ENCODE measurements at regions of chr20 and their contacts with region 1.

Region 1: DNA sequence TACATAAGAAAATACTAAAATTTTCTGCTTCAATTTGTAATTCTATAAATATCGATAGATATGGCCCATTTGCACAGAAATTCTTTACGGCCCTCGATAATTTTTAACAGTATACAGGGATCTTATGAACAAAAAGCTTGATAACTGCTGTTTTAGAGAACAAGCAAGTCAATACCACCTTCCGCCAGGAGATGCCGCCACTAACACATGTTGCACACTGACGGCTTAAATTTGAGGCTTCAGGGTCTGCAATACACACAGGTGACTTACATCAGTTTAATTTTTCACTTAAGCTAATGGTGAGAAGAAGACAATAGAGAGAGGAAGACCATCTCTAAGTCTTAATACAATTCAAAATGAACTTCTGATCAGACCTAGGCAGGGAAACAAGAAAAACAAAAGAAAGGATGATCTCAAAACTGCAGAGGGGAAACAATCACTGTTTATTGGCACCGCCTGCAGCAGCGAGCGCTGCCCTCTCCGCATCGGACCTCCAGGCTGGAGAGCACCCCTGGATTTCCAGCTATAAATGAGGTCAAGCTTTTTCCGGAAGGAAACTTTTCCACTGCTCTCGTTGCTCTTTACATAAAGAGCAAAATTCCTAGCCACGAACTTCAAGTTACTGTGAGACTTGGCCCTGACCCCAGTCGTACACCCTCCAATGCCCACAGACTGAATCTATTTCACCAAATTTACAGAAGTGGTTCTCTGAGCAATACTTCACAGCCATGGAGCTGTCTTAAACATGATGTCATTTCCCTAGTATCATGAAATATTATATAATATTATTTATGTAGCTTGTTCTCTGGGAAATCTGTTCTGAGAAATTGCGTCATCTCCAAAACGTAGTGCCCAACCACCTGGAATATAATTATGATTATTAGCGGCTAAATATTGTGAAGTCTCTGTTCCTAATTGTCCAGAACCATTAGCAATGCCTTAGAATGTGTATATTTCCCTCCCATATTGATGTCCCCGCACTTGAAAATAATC is 54.1 kb downstream of the OTOR start:
- DNase-seq: peak in 1 of 2 experiments; percentile 64
- H3K4me3 ChIP-seq: no peak overlapping the region
- H3K27ac ChIP-seq: no peak overlapping the region
- H3K4me1 ChIP-seq: no peaks in the 10 kb centered on the region
- H3K27me3 ChIP-seq: peaks cover 82% of the 10 kb centered on the region
- CTCF ChIP-seq: peak; percentile 88

Region 2: GRCh38 chr20:16821211-16822089 is 19.2 kb after region 1 on chr20:
- CTCF ChIA-PET with region 1: interaction called, 10 read pairs
- POLR2A ChIA-PET with region 1: no interaction called
- intact Hi-C with region 1: loop called (anchors 1 kb)
- DNase-seq: peak; percentile 25 to 43
- H3K4me3 ChIP-seq: no peak overlapping the region
- H3K27ac ChIP-seq: no peak overlapping the region
- H3K4me1 ChIP-seq: no peaks in the 10 kb centered on the region
- H3K27me3 ChIP-seq: peaks cover 17% of the 10 kb centered on the region
- CTCF ChIP-seq: peak; percentile 95

Region 3: DNA sequence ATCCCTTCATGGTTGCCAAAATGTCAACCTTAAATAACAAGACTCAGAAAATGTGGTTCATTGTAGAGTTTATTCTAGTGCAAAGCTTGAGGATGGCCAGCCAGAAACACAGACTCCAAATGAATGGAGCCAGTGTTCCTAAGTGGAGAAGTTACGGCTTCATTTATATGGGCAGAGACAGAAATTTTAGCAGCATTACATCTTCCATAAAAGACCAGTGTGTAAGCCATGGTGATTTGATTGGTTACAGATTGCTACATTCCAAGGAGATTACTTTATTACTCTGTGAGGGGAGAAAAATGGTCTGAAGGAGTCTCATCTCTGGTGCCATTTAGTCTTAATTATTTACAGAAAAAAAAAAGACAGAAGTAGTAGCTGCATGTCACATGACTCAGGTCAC is 43.8 kb after region 1 on chr20:
- CTCF ChIA-PET with region 1: no interaction called
- POLR2A ChIA-PET with region 1: no interaction called
- intact Hi-C with region 1: no loop called
- DNase-seq: no peak
- H3K4me3 ChIP-seq: no peak overlapping the region
- H3K27ac ChIP-seq: no peak overlapping the region
- H3K4me1 ChIP-seq: no peaks in the 10 kb centered on the region
- H3K27me3 ChIP-seq: no peaks in the 10 kb centered on the region
- CTCF ChIP-seq: no peak

Region 4: DNA sequence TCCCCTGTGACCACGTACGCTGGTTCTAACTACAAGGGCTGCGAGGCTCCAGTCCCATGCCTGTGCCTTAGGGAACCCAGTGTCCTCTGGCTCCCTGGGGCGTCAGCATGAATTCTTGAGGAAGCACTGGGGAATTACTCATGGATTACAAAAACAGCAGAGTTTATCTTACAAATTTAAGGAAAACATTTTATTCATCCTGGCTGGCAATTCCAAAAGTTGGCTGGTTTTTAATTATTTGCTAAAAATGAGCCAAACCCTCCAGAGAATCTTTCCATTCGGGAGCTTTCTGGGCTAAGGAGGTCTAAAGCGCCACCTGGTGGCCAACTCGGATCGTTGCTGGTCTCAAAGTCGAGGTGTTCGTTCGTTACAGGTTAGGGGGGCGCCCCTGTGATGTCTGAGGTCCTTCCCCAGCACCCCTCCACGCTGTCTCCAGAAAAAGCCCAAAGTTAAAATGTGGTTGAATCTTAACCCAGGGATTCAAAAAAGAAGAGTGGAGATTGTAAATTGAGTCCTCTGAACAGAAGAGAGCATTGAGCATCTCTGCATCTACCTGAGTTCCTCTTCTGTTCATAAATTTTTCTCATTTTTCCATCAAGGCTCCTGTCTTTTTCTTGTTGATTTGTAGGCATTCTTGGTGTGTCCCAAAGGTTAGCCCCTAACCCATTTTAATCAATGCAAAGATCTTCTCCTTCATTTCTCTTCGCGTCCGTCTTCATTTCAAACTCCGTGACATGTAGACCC is 629.6 kb after region 1 on chr20:
- CTCF ChIA-PET with region 1: interaction called, 4 read pairs
- POLR2A ChIA-PET with region 1: interaction called, 5 read pairs
- intact Hi-C with region 1: loop called (anchors 1 kb)
- DNase-seq: peak in 1 of 2 experiments; percentile 43
- H3K4me3 ChIP-seq: no peak overlapping the region
- H3K27ac ChIP-seq: no peak overlapping the region
- H3K4me1 ChIP-seq: no peaks in the 10 kb centered on the region
- H3K27me3 ChIP-seq: peaks cover 71% of the 10 kb centered on the region
- CTCF ChIP-seq: peak; percentile 96

Region 5: DNA sequence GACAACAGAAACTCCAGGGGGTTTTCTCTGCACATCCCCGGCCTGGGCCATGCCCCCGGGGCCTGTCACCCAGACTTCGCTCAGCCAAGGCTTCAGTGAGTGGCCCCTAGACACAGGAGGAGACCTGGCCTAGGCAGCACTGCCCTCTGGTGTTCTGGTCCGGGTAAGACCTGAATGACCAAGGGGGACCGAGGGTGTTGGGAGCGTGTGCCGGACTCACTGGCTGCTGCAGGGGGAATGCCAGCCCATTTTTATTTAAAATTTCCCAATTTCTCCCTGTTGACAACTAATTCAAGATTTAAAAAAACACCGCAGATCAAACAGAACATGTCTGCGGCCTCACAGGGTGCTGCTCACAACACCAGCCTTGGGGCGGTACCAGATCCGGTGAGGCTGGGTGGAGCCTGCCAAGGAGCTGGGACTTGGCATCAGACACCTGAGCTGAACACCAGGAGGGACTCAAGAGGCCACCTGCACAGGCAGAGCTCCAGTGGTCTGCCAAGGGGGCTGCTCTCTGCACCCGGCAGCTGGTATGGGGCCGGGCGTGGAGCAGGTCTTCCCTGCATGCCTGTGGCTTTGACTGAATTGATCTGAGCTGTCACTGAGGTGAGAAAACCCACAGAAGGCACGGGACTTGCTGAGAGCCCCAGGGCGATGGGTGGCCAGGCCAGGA is 815.5 kb after region 1 on chr20:
- CTCF ChIA-PET with region 1: no interaction called
- POLR2A ChIA-PET with region 1: no interaction called
- intact Hi-C with region 1: loop called (anchors 5 kb)
- DNase-seq: peak in 1 of 2 experiments; percentile 55
- H3K4me3 ChIP-seq: no peak overlapping the region
- H3K27ac ChIP-seq: no peak overlapping the region
- H3K4me1 ChIP-seq: no peaks in the 10 kb centered on the region
- H3K27me3 ChIP-seq: no peaks in the 10 kb centered on the region
- CTCF ChIP-seq: peak; percentile 82

Region 6: GRCh38 chr20:17995967-17996819 is 1194.0 kb after region 1 on chr20:
- CTCF ChIA-PET with region 1: no interaction called
- POLR2A ChIA-PET with region 1: no interaction called
- intact Hi-C with region 1: loop called (anchors 10 kb)
- DNase-seq: peak in 1 of 2 experiments; percentile 41
- H3K4me3 ChIP-seq: no peak overlapping the region
- H3K27ac ChIP-seq: no peak overlapping the region
- H3K4me1 ChIP-seq: peaks cover 5% of the 10 kb centered on the region
- H3K27me3 ChIP-seq: no peaks in the 10 kb centered on the region
- CTCF ChIP-seq: peak; percentile 88

Measured in PC-9 (cell line).